Cardiac septum (tissue), 1 donor: ENCODE measurements at regions of chr9 and their contacts with region 1.

Region 1: GRCh38 chr9:6681147-6681956 is 35.8 kb upstream of the GLDC start:
- DNase-seq: peak; percentile 97

Region 2: GRCh38 chr9:6412487-6413364 is 268.6 kb before region 1 on chr9 and contains the start of gene UHRF2:
- intact Hi-C with region 1: loop called (anchors 5 kb)
- DNase-seq: peak; percentile 99
- total RNA-seq, gene UHRF2: 14.3 TPM

Region 3: DNA sequence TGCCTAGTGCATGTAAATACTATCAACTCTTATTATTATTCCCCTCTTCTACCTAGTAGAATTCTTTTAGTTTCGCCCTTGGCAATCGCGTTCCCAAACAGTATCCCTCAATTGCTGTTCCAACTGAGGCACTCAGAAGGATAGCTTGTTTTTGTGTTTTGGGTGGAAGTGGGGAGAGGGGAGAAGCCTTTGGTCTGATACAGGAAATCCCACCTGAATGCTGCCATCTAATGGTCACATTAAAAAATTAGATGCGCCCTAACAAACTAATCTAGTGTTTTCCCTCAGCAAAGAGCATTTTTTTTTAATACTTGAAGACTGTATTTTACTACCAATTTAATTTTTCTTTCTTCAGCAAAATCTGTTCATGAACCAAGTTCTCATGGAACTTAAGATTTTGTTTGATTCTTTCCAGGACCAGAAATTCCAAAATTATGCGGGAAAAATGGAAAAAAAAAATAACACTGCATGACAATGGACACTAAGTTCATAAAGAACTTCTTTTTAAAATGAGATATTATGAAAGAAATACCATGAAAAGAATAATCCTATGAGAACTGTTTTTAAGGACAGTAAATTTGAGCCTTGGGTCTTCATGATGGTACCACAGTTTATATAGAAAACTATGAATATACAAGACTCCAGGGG is 13.6 kb before region 1 on chr9:
- intact Hi-C with region 1: no loop called
- DNase-seq: no peak

Region 4: GRCh38 chr9:6703898-6704639 is 22.7 kb after region 1 on chr9:
- intact Hi-C with region 1: loop called (anchors 2 kb)
- DNase-seq: peak; percentile 95

Region 5: DNA sequence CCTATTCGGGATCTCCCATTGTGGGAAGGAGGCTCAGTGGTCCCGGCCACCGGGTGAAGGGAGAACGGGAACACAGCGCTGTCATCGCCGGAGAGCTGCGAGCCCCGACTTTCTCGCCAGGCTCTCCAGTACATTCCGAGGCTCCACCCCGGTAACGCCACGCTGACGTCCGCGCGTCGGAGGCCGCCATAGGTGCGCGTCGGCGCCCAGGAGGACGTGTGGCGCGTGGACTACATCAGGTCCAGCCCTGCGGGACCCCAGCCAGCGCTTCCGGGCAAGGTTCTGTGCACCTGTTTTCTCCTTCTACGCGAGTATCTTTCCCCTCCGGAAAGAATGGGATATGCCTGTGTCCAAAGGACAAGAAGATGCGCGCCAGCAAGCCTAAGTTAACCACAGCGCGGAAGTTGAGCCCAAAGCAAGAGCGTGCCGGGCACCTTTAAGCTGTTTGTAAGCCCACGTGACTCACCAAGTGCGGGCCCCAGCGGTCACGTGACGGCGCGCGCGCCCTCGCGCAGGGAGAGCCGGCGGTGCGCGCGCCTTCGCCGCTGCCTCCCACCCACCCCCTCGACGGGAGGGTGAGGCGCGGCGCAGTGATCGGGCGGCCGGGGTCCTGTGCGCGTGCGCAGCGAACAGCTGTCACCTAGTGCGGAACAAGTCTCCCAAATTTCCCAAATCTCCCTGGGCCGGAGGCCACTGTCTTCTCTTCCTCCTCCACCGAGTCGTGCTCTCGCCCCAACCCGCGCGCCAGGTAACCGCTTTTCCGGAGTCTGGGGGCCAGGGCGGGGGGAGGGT is 76.3 kb after region 1 on chr9 and contains the start of gene KDM4C:
- intact Hi-C with region 1: loop called (anchors 2 kb)
- DNase-seq: peak; percentile 96
- total RNA-seq, gene KDM4C: 16.8 TPM